Tibial artery (tissue), 4 donors: ENCODE measurements at regions of chr7 and their contacts with region 1.

Region 1: DNA sequence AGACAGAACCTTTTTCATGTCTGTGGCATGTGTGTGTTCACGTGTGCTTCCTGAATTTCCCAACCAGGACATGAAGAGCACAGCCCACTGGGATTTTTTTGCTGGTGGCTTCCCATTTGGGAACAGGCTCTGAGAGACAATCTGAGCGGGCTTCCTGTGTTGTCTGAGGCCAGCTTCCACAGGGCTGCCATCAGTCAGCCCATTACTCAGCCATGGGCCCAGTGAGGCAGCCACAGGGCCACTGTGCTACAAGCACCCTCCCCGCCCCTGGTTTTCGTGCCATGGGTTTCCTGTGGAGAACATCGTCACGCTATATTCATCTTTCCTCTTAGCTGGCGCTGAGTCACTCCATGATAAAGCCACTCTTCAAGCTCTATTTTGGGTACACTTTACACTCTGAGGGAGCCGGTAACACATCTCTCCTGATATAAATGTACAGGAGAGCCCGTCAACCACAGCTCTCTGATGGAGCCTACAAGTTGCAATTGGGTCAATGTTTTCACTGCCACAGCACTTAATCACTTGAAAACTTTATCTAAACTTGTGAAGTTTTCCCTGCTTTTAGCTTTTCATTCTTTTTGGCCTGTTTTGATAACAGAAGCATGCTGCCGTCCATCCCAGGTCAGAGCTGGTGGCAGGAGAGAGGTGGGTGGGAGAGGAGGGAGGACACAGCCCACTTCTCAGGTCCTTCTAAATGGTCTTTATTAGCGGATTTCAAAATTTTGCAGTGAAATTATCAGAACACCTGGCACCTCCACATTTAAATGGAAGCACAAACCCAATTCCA is 96.9 kb downstream of the HIPK2 start:
- DNase-seq: peak; percentile 72 to 92
- H3K4me3 ChIP-seq: no peak overlapping the region
- H3K27ac ChIP-seq: peak overlapping the region; percentile 89 to 92
- H3K4me1 ChIP-seq: peaks cover 0 to 61% (median 52%) of the 10 kb centered on the region in 4 donors
- H3K27me3 ChIP-seq: no peaks in the 10 kb centered on the region
- CTCF ChIP-seq: no peak

Region 2: DNA sequence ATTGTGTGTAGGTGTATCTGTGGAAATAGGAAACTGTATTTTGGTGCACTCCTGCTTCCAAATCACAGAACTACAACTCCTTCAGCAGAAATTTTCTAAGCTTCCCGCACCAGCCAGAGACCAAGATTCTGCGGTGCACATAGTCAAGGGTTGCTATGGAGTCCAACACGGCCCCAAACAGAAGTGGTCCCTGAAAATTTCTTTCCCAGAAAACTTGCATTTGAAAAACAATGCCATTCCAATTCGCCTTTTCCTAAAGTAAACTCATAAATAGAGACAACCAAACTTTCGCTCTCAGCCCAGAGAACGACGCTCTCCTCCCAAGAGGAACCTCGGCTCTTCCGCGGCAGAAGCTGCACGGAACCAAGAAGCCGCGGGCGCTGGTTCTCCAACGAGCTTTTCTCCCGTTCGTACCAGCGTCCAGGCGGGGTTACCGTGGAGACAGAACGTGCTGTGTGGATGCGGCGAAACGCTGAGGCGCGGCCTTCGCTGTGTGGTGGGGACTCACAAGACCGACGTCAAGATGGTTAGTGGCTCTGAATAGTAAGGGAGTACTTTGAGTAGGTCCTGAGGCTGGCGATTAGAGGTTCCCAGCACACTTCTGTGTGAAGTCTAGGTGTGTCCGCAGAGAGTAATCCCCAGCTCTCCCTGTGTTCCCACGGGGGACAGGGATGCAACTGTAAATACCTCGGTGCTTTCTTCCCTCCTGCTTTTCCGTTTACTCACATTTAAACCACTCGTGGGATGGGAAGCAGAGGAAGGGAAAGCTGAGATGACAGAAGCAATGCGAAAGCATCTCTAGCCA is 547.3 kb before region 1 on chr7:
- intact Hi-C with region 1: no loop called
- DNase-seq: peak; percentile 82 to 88
- H3K4me3 ChIP-seq: peak overlapping the region; percentile 53 to 54
- H3K27ac ChIP-seq: peak overlapping the region; percentile 52 to 57
- H3K4me1 ChIP-seq: peaks cover 0 to 9% (median 7%) of the 10 kb centered on the region in 4 donors
- H3K27me3 ChIP-seq: no peaks in the 10 kb centered on the region
- CTCF ChIP-seq: no peak

Region 3: DNA sequence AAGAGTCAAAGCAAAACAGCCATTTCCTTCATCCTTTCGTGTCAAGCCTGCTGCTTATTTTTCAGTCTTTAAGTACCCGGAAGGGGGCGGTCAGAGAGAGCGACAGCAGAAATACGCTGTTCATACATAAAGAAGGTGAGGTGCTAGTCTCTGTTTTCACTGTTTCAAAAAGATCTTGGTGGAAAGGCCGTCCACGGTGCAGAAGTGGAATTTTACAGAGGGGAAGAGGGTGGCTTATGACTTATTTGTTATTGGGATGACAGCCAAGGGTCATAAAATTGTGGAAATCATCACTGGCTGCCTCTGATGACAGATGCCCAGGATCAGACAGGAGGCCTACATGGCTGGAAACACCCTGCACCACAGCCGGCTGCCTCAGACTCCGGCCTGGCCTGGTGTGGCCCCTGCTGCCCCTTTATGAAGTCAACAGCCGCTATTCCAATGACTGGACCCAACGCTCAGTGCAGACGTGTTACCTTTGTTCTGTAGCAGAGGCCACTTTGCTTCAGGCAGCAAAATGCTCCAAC is 39.9 kb after region 1 on chr7:
- intact Hi-C with region 1: loop called (anchors 5 kb)
- DNase-seq: peak in 1 of 2 donors; percentile 85
- H3K4me3 ChIP-seq: no peak overlapping the region
- H3K27ac ChIP-seq: peak overlapping the region; percentile 35 to 56
- H3K4me1 ChIP-seq: peaks cover 0 to 63% (median 23%) of the 10 kb centered on the region in 4 donors
- H3K27me3 ChIP-seq: no peaks in the 10 kb centered on the region
- CTCF ChIP-seq: no peak

Region 4: GRCh38 chr7:139777948-139778841 is 97.3 kb after region 1 on chr7 and contains the start of gene HIPK2:
- intact Hi-C with region 1: loop called (anchors 10 kb)
- DNase-seq: peak; percentile 75 to 89
- H3K4me3 ChIP-seq: peak within 1 kb of the TSS; percentile 68 to 83
- H3K27ac ChIP-seq: peak within 1 kb of the TSS; percentile 96 to 99
- H3K4me1 ChIP-seq: peaks cover 0 to 39% (median 27%) of the 10 kb centered on the region in 4 donors
- H3K27me3 ChIP-seq: no peaks in the 10 kb centered on the region
- CTCF ChIP-seq: no peak

Region 5: GRCh38 chr7:140364819-140365218 is 684.0 kb after region 1 on chr7:
- intact Hi-C with region 1: no loop called
- DNase-seq: no peak
- H3K4me3 ChIP-seq: no peak overlapping the region
- H3K27ac ChIP-seq: no peak overlapping the region
- H3K4me1 ChIP-seq: no peaks in the 10 kb centered on the region
- H3K27me3 ChIP-seq: no peaks in the 10 kb centered on the region
- CTCF ChIP-seq: no peak